ENCODE measurements at regions of chr19 and their contacts with region 1.

Region 1: GRCh38 chr19:46515879-46516350 is 20.2 kb upstream of the PNMA8B start:
- DNase-seq: no peak
- ATAC-seq: peak; percentile 39
- H3K4me3 Mint-ChIP-seq: no peak overlapping the region
- H3K27ac Mint-ChIP-seq: no peak overlapping the region
- H3K4me1 Mint-ChIP-seq: 0 out of 2 replicates have a peak, but pooled peaks cover 2% of the 10 kb centered on the region
- H3K27me3 Mint-ChIP-seq: no peaks in the 10 kb centered on the region
- CTCF ChIP-seq: no peak; the same call in 1 of the 2 replicates

Region 2: DNA sequence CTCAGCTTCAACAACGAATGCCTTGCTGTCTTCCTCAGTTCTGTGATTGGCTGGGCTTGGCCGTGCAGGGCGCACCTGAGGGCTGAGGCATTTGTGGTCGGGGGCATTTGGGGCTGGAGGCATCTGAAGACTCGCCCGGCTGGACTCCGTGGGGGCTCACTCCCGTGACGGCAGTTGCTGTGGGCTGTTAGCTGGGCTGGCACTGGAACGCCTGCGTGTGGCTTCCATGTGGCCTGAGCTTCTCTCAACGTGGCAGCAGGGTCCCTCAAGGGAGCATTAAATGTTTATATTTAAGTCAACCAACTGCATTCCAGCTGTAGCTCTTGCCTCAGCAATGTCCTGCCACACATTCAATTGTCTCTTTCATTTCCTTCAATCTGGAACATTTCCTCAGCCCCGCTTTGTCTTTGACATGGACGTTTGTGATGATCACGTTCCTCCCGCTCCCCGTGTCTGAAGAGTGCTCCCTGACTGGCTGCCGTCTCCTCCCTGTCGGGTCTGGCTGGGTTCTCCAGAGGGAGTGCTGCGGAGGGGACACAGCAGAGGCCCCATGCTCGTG is 123.6 kb before region 1 on chr19:
- CTCF ChIA-PET with region 1: interaction called, 15 read pairs
- POLR2A ChIA-PET with region 1: interaction called, 3 read pairs
- DNase-seq: no peak
- ATAC-seq: no peak
- H3K4me3 Mint-ChIP-seq: no peak overlapping the region
- H3K27ac Mint-ChIP-seq: peak overlapping the region; percentile 78; the same call in 1 of the 2 replicates
- H3K4me1 Mint-ChIP-seq: peaks cover 5% of the 10 kb centered on the region
- H3K27me3 Mint-ChIP-seq: no peaks in the 10 kb centered on the region
- CTCF ChIP-seq: no peak

Region 3: DNA sequence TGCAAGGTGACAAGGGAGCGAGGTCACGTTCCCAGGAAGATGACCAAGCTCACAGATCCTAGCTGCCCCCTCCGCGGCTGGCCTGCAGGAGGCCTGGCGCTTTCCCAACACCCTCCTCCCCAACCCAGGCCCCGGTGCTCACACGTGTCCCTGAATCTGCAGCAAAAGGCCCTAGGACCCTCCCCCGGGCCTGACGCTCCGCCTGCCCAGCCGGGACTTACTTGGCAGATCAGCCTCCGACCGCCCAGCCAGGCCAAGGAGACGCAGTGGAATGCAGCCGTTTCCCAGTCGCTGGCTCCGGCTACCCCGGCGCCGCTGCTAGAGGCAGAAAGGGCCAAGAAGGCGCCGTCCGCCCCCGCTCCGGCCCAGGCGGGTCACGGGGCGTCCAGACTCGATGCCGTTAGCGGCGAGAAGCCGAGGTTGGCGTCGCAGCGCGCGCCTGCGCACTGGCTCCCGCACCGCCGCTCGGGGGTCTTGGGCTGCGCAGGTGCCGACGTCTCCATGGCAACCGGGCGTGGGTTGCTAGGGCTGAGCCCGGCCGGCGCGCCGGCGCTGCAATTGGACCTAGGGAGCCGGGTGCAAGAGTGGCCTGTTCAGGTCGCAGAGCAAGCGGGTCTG is 44.7 kb before region 1 on chr19 and contains the start of gene PNMA8A:
- CTCF ChIA-PET with region 1: no interaction called
- POLR2A ChIA-PET with region 1: no interaction called
- DNase-seq: peak; percentile 95
- ATAC-seq: peak; percentile 93
- H3K4me3 Mint-ChIP-seq: peak within 1 kb of the TSS; percentile 77
- H3K27ac Mint-ChIP-seq: no peak within 1 kb of the TSS
- H3K4me1 Mint-ChIP-seq: peaks cover 11% of the 10 kb centered on the region
- H3K27me3 Mint-ChIP-seq: peaks cover 21% of the 10 kb centered on the region
- CTCF ChIP-seq: no peak
- total RNA-seq, gene PNMA8A: 24.8 to 30.5 TPM (median 25.4 TPM) in 3 replicates

Region 4: GRCh38 chr19:46503848-46504453 is 12.0 kb before region 1 on chr19:
- CTCF ChIA-PET with region 1: interaction called, 10 read pairs
- POLR2A ChIA-PET with region 1: no interaction called
- DNase-seq: no peak
- ATAC-seq: no peak
- H3K4me3 Mint-ChIP-seq: no peak overlapping the region
- H3K27ac Mint-ChIP-seq: no peak overlapping the region
- H3K4me1 Mint-ChIP-seq: no peaks in the 10 kb centered on the region
- H3K27me3 Mint-ChIP-seq: no peaks in the 10 kb centered on the region; the same call in none of the 2 replicates
- CTCF ChIP-seq: no peak

Region 5: GRCh38 chr19:46537136-46538097 is 21.5 kb after region 1 on chr19:
- CTCF ChIA-PET with region 1: interaction called, 33 read pairs
- POLR2A ChIA-PET with region 1: no interaction called
- DNase-seq: peak; percentile 83
- ATAC-seq: peak; percentile 89
- H3K4me3 Mint-ChIP-seq: no peak overlapping the region
- H3K27ac Mint-ChIP-seq: no peak overlapping the region
- H3K4me1 Mint-ChIP-seq: 0 out of 2 replicates have a peak, but pooled peaks cover 2% of the 10 kb centered on the region
- H3K27me3 Mint-ChIP-seq: peaks cover 5% of the 10 kb centered on the region
- CTCF ChIP-seq: peak; percentile 92

Region 6: GRCh38 chr19:46571531-46571930 is 55.6 kb after region 1 on chr19:
- CTCF ChIA-PET with region 1: interaction called, 13 read pairs
- POLR2A ChIA-PET with region 1: no interaction called
- DNase-seq: peak; percentile 61
- ATAC-seq: peak; percentile 100
- H3K4me3 Mint-ChIP-seq: no peak overlapping the region
- H3K27ac Mint-ChIP-seq: no peak overlapping the region
- H3K4me1 Mint-ChIP-seq: peaks cover 6% of the 10 kb centered on the region; the same call in 1 of the 2 replicates
- H3K27me3 Mint-ChIP-seq: peaks cover 10% of the 10 kb centered on the region
- CTCF ChIP-seq: no peak